ENCODE measurements at regions of chr16 and their contacts with region 1.

Region 1: DNA sequence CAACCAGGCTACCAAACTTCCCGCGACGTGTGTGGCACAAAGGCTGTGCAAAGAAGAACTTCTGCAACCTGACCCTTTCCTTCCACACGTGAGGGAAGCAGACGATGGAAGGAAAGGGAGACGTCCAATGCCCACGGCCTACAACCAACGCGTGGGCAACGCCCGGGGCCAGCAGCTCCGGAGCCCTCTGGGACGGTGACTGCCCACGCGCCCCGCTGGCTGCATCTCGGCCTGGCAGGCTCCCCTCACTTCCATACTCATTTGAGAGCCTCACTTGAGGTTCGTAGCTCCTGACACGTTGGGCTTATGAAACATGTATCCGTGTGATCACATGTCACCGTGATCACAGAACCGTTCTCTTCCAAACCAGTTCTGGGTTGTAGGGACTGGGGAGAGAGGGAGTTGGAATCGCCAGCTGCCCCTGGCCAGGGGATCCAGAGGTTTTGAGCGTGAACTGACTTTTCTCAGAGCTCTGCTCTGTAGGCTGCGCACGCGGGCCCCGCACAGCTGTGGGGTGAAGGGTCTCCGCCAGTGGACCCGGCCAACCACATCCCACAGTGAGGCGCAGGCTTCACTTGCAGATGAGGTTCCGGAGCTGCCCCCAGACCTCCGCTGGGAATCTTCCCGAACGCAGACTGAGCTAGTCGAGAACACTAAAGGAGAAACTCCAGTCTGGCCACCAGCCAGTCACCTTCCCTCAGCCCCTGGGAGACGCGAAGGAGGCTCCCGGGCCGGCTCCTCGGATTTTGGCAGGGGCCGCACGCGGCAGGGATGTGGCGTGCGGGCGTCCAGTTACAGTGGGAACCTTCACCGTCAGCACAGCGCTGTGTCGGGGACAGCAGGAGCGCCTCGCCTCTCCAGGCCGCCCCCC is 1.0 kb downstream of the LMF1 start:
- DNase-seq: peak; percentile 21

Region 2: DNA sequence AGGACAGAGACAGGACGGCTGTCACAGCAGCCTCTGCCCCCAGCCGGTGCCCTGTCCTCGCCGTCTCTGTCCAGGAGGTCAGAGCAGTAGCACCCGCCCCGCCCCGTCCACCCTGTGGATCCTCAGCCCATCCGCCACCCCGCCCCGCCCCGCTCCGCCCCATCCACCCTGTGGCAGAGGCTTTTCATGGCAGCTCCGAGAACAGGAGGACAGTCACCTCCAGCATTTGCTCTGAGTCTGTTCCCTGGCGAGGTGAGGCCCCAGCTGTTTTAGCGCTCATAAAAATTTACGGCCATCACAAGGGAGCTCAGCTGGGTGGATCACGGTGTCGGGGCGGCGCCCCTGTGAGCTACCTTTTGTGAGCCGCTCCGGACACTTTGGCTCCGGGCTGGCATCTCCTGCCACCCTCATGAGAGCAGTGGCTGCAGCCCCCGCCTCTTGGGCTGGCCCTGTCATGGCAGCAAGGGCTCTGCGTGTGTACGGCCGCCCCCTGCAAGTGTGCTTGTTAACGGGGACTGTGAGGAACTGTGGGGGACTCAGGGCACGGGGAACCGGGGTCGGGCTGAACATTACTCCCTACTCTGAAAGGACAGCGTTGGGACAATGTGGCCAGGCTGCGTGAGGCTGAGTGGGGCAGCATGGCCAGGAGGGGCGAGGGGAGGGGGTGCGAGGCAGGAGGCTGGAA is 136.9 kb before region 1 on chr16:
- in situ Hi-C with region 1: loop called (anchors 10 kb)
- DNase-seq: no peak

Region 3: GRCh38 chr16:861446-861845 is 108.3 kb before region 1 on chr16:
- in situ Hi-C with region 1: no loop called
- DNase-seq: no peak

Measured in Caki2 (cell line).